ENCODE measurements at regions of chr6 and their contacts with region 1.

Region 1: GRCh38 chr6:90197854-90198496 is 98.7 kb downstream of the BACH2 start:
- DNase-seq: peak; percentile 84
- H3K4me3 ChIP-seq: no peak overlapping the region
- H3K27ac ChIP-seq: no peak overlapping the region
- H3K4me1 ChIP-seq: peaks cover 2% of the 10 kb centered on the region
- CTCF ChIP-seq: no peak

Region 2: GRCh38 chr6:90154755-90155470 is 43.1 kb before region 1 on chr6:
- CTCF ChIA-PET with region 1: no interaction called
- POLR2A ChIA-PET with region 1: no interaction called
- intact Hi-C with region 1: no loop called
- DNase-seq: no peak
- H3K4me3 ChIP-seq: no peak overlapping the region
- H3K27ac ChIP-seq: no peak overlapping the region
- H3K4me1 ChIP-seq: no peaks in the 10 kb centered on the region
- CTCF ChIP-seq: no peak

Region 3: GRCh38 chr6:90216072-90216977 is 18.4 kb after region 1 on chr6:
- CTCF ChIA-PET with region 1: interaction called, 4 read pairs
- POLR2A ChIA-PET with region 1: interaction called, 4 read pairs
- intact Hi-C with region 1: loop called (anchors 2 kb)
- DNase-seq: peak; percentile 70
- H3K4me3 ChIP-seq: peak overlapping the region; percentile 18
- H3K27ac ChIP-seq: peak overlapping the region; percentile 60
- H3K4me1 ChIP-seq: peaks cover 79% of the 10 kb centered on the region
- CTCF ChIP-seq: peak; percentile 60

Region 4: GRCh38 chr6:90301816-90302215 is 103.8 kb after region 1 on chr6:
- CTCF ChIA-PET with region 1: no interaction called
- POLR2A ChIA-PET with region 1: no interaction called
- intact Hi-C with region 1: no loop called
- DNase-seq: no peak
- H3K4me3 ChIP-seq: no peak overlapping the region
- H3K27ac ChIP-seq: peak overlapping the region; percentile 87
- H3K4me1 ChIP-seq: peaks cover 92% of the 10 kb centered on the region
- CTCF ChIP-seq: no peak

Measured in OCI-LY7 (cell line).